Sciatic nerve (tissue), 2 donors: ENCODE measurements at regions of chr16 and their contacts with region 1.

Region 1: GRCh38 chr16:84423416-84423837 is 55.1 kb downstream of the ATP2C2 start:
- DNase-seq: no peak
- ATAC-seq: no peak

Region 2: GRCh38 chr16:84116720-84117493 is 306.5 kb before region 1 on chr16 and contains the start of gene MBTPS1:
- intact Hi-C with region 1: no loop called
- DNase-seq: peak; percentile 99
- ATAC-seq: peak; percentile 99
- total RNA-seq, gene MBTPS1: 91.1 TPM

Region 3: DNA sequence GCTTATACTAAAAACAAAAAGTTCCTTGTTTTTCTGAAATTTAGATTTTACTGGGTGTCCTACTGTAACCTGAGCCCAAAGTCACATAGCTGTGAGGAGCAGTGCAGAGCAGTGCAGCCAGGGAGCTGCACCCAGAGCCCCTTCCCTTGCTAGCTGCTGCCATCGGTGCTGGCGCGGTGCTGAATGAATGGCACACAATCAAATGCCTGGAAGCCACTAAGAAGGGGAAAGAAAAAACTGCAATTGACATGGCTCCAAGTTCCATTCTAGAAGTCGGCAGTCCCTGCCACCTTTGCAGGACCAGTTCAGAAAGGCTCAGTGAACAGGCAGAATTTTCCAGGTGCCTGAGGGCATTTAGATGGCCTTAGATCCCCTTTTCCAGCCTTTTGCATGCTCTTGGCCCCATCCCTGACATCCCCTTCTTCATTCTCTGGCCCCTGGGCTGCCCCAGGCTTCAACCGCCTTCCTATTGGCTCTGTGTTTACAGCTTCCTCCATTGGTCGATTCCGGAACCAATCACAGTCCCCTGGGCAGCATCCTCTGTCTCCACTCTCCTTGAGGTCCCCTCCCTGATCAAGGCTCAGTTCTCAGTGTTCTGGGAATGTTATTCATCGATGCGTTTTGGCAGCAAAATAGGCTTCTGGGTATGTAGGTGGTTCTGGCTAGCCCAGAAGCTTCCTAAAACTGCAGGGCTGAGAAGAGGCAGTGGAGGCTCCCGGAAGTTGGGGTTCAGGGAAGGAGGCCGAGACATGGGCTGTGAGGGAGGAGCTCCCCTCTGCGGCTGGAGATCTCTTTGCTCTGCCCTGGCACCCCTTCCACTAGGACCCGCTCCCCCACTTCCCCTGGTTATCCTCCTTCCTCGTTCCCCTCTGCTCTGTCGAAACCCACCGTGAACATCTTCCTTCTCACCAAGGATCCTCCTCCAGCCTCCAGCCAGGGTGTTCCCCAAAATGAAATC is 17.1 kb before region 1 on chr16:
- intact Hi-C with region 1: no loop called
- DNase-seq: no peak
- ATAC-seq: peak; percentile 44

Region 4: DNA sequence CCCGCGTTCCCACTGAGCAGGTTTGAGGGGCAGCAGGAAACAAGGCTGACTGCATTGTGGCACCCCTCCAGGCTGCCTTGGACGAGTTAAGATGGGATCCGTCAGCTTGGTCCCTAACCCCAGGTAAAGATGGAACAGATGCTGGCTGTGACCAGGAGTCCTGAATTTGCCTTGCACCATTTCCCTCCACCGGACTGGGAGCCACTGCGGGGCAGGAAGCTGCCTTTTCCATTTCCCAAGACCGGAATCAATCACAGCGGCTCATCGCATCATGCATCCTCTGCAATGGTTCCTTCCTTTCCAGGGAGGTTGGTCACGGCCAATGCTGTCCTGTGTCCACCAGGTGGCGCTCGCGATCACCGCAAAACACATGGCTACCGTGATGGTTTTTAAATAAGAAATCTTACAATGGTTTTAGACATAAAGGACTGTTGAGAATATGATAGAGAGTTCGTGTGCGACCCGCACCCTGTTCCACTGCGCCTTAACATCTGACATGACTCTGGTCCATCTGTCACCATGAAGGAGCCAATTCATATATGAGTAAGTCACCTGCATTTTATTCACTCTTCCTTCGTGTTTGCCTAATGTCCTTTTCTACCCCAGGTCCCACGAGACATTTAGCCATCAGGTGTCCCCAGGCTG is 87.9 kb after region 1 on chr16:
- intact Hi-C with region 1: no loop called
- DNase-seq: peak; percentile 93
- ATAC-seq: peak; percentile 86

Region 5: GRCh38 chr16:85767569-85767968 is 1344.1 kb after region 1 on chr16:
- intact Hi-C with region 1: loop called (anchors 5 kb)
- DNase-seq: no peak
- ATAC-seq: no peak